Head of caudate nucleus (tissue), 42 donors: ENCODE measurements at regions of chr13 and their contacts with region 1.

Region 1: GRCh38 chr13:32019612-32020233 is 11.9 kb upstream of the FRY start:
- DNase-seq: peak in 38 of 42 donors; percentile 23 to 83 (median 52)

Region 2: DNA sequence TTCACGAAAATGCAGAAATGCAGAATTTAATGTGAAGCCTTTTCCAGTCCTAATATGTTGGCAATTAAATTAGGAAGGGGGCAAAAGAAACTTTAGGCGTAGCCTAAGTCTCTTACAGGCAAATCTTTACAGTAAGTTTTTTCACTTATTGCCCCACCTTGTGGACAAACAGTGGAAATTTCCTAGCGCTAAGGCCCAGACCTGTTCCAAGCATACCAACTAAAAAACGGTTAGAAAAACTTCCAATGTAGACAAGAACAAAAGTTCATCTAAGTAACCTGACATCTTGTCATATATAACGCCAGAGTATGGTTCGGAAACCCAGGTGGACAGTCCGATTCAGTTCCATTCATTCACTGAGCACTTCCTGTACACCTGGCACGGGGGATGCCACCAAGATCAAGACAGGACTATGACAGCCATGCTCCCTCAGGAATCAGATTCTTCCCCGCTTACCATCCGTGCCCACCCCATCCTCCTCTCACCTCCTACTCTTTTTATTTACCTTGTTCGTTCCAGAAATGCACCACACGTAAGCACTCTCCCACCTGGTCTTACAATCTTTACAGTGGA is 290.5 kb after region 1 on chr13:
- intact Hi-C with region 1: loop called (anchors 5 kb)
- DNase-seq: peak in 13 of 42 donors; percentile 4 to 60 (median 22)